PC-3 (cell line): ENCODE measurements at regions of chr15 and their contacts with region 1.

Region 1: DNA sequence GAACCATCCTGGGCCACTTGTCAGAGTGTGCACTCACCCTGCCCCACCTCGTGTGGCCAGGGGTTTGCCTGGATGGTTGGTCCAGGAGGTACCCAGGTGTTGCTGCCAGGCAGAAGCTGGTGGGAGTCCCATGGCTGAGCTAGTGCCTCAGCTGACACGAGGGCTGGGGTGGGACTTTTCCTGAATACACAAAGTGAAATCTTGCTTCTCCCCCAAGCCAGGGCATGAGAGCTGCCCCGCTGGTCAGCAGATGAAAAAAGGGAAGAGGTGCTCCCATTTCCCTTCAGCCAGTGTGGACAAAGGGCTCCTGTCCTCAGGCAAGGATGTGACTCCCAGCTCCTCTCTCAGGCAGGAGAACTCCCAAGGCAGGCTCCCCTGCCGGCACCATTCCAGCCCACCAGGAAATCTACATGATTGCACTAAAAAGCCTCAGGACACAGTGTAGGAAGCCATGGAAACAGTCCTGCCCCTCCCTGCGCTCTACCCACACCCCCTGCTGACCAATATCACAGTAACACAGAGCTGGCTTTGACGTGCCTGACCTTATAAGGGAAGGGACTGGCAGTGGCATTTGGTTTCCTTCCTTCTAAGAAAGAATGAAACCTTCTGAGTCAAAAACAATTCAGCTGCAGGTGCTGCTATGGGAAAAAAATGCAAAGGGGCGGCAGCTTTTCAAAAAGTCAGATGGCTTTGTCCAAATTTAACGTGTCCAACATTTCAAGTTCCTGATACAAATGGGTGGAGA is 33.9 kb downstream of the MYO5C start:
- DNase-seq: peak; percentile 91
- ATAC-seq: peak; percentile 98
- H3K4me3 ChIP-seq: no peak overlapping the region
- H3K27ac ChIP-seq: peak overlapping the region; percentile 92
- H3K4me1 ChIP-seq: peaks cover 26% of the 10 kb centered on the region
- H3K27me3 ChIP-seq: no peaks in the 10 kb centered on the region
- CTCF ChIP-seq: no peak

Region 2: GRCh38 chr15:52288051-52288942 is 26.6 kb after region 1 on chr15:
- CTCF ChIA-PET with region 1: interaction called, 9 read pairs
- POLR2A ChIA-PET with region 1: no interaction called
- intact Hi-C with region 1: loop called (anchors 1 kb)
- DNase-seq: peak; percentile 93
- ATAC-seq: peak; percentile 91
- H3K4me3 ChIP-seq: peak overlapping the region; percentile 30; the same call in 1 of the 2 replicates
- H3K27ac ChIP-seq: peak overlapping the region; percentile 98
- H3K4me1 ChIP-seq: peaks cover 44% of the 10 kb centered on the region
- H3K27me3 ChIP-seq: no peaks in the 10 kb centered on the region
- CTCF ChIP-seq: no peak

Region 3: DNA sequence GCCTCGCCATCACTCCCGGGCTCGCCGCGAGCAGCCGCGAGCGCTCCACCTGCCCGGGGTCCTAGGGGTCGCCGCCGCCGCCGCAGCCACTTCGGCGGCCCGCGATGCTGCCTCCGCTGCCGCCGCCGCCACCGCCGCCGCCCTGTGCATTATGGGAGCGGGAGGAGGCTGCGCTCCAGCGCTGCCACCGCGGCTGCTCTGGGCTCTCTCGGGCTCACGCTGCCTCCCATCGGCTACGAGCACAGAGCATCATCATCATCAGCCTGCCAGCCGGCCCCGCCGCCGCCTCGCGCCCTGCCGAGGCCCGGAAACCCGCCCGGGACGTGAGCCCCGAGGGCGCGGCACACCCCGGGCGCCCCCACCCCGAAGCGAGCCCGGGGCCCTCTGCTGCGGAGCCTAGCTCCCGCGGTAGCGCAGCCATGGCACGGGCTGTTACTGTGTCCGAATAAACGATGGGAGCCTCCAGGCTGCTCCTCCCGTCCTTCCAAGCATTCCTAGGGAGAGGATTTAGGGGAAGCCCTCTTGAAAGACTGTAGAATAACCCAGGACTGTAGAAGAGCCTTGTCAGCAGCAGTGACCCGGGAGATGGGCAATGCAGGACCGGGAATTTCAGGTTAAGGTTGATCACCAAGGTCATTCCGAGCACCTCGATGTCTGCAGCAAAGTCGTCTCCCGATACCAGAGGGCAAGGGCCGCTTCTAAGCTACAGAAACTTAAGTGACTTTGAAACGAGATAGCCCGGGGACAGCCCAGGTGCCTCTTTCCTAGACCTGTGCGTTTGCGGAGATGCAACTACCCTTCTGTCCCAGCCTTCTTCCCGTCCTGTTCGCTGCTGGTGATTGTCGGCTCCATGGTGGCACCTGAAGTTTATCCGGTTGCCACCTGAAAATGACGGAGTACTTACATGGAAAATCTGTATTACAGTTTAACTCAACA is 267.6 kb after region 1 on chr15:
- CTCF ChIA-PET with region 1: interaction called, 3 read pairs
- POLR2A ChIA-PET with region 1: no interaction called
- intact Hi-C with region 1: loop called (anchors 5 kb)
- DNase-seq: peak; percentile 63
- ATAC-seq: peak; percentile 80
- H3K4me3 ChIP-seq: peak overlapping the region; percentile 77
- H3K27ac ChIP-seq: peak overlapping the region; percentile 46; the same call in 1 of the 2 replicates
- H3K4me1 ChIP-seq: peaks cover 11% of the 10 kb centered on the region
- H3K27me3 ChIP-seq: no peaks in the 10 kb centered on the region
- CTCF ChIP-seq: no peak

Region 4: DNA sequence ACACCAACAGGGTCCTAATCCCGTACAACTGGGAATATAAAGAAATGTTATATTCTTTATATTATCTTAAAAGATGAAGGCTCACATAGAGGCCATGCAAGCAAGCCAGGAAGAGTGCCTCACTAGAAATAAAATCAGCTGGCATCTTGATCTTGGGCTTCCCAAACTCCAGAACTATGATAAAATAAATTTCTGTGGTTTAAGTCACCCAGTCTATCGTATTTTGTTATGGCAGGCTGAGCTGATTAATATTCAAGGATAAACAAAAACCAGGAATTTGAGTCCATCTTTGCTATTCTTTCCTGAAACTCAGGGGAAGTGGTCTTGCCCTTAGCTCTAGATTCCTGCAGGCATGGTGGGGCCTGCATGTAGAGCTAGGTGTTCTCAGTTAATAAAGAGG is 374.8 kb after region 1 on chr15:
- CTCF ChIA-PET with region 1: no interaction called
- POLR2A ChIA-PET with region 1: no interaction called
- intact Hi-C with region 1: no loop called
- DNase-seq: no peak
- ATAC-seq: no peak
- H3K4me3 ChIP-seq: no peak overlapping the region
- H3K27ac ChIP-seq: no peak overlapping the region
- H3K4me1 ChIP-seq: no peaks in the 10 kb centered on the region
- H3K27me3 ChIP-seq: no peaks in the 10 kb centered on the region
- CTCF ChIP-seq: no peak